Gastrocnemius medialis (tissue), 4 donors: ENCODE measurements at regions of chr11 and their contacts with region 1.

Region 1: GRCh38 chr11:10455637-10456487 is 798 bp downstream of the AMPD3 start:
- DNase-seq: peak; percentile 57
- ATAC-seq: peak; percentile 9 to 27
- H3K4me3 ChIP-seq: peak overlapping the region; percentile 76 to 84 (median 78)
- H3K27ac ChIP-seq: peak overlapping the region; percentile 94 to 100 (median 98)
- H3K4me1 ChIP-seq: peaks cover 51 to 56% of the 10 kb centered on the region in 2 donors
- H3K27me3 ChIP-seq: no peaks in the 10 kb centered on the region
- CTCF ChIP-seq: no peak
- POLR2A ChIP-seq: peak; percentile 84 to 87

Region 2: GRCh38 chr11:10139656-10140055 is 316.2 kb before region 1 on chr11:
- in situ Hi-C with region 1: no loop called
- intact Hi-C with region 1: no loop called
- DNase-seq: no peak
- ATAC-seq: no peak
- H3K4me3 ChIP-seq: no peak overlapping the region
- H3K27ac ChIP-seq: no peak overlapping the region
- H3K4me1 ChIP-seq: peaks cover 0 to 7% of the 10 kb centered on the region in 2 donors
- H3K27me3 ChIP-seq: no peaks in the 10 kb centered on the region
- CTCF ChIP-seq: no peak
- POLR2A ChIP-seq: no peak

Region 3: DNA sequence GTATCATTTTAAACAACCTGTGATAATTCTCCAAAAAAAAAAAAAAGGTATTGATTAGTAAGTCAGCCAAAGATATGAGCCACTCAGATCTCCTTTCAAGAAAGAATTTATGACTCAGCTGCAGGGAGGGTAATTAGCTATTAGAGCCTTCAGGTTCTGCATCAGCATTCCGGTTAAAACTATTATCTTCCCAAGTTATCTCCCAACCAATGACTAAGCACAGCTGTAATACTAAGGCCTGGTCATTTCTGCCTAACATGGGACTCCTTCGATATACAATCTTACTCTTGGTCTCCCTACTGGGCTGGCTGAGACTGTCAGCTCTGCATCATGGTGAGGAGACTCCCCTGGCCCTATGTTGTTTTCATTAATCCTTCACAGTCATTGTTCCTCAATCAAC is 222.3 kb before region 1 on chr11:
- in situ Hi-C with region 1: no loop called
- intact Hi-C with region 1: no loop called
- DNase-seq: no peak
- ATAC-seq: no peak
- H3K4me3 ChIP-seq: no peak overlapping the region
- H3K27ac ChIP-seq: no peak overlapping the region
- H3K4me1 ChIP-seq: peaks cover 3 to 5% of the 10 kb centered on the region in 2 donors
- H3K27me3 ChIP-seq: no peaks in the 10 kb centered on the region
- CTCF ChIP-seq: no peak
- POLR2A ChIP-seq: no peak

Region 4: GRCh38 chr11:10405855-10406592 is 49.8 kb before region 1 on chr11:
- in situ Hi-C with region 1: no loop called
- intact Hi-C with region 1: loop called (anchors 1 kb)
- DNase-seq: peak; percentile 80 to 82
- ATAC-seq: peak; percentile 33 to 62
- H3K4me3 ChIP-seq: no peak overlapping the region
- H3K27ac ChIP-seq: peak overlapping the region; percentile 77 to 95 (median 89)
- H3K4me1 ChIP-seq: peaks cover 55 to 56% of the 10 kb centered on the region in 2 donors
- H3K27me3 ChIP-seq: no peaks in the 10 kb centered on the region
- CTCF ChIP-seq: peak; percentile 56 to 81 (median 71)
- POLR2A ChIP-seq: no peak

Region 5: DNA sequence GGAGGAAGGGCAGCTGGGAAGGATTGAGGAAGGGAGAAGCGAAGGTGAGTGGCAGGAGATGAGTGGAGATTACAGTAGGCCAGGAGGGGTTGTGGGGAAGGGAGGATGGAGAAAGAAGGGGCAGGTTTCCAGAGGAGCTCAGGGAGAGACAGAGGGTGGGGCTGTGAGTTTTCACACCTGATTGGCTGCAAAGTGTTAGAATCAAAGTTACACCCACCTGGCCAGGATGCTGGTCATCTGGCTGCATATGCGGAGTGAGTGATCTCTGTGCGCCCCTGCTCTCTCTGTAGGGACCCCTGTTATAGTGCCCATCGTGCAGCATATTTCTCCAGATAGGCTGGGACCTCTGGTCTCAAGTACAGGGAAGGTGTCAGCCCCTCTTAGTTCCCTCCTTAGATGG is 17.5 kb after region 1 on chr11:
- in situ Hi-C with region 1: no loop called
- intact Hi-C with region 1: loop called (anchors 2 kb)
- DNase-seq: no peak
- ATAC-seq: no peak
- H3K4me3 ChIP-seq: no peak overlapping the region
- H3K27ac ChIP-seq: peak overlapping the region in 3 of 4 donors; percentile 34 to 73 (median 68)
- H3K4me1 ChIP-seq: peaks cover 8 to 42% of the 10 kb centered on the region in 2 donors
- H3K27me3 ChIP-seq: no peaks in the 10 kb centered on the region
- CTCF ChIP-seq: no peak
- POLR2A ChIP-seq: no peak

Region 6: GRCh38 chr11:10484461-10485180 is 28.8 kb after region 1 on chr11:
- in situ Hi-C with region 1: no loop called
- intact Hi-C with region 1: no loop called
- DNase-seq: no peak
- ATAC-seq: no peak
- H3K4me3 ChIP-seq: no peak overlapping the region
- H3K27ac ChIP-seq: no peak overlapping the region
- H3K4me1 ChIP-seq: peaks cover 8 to 19% of the 10 kb centered on the region in 2 donors
- H3K27me3 ChIP-seq: no peaks in the 10 kb centered on the region
- CTCF ChIP-seq: no peak
- POLR2A ChIP-seq: no peak

Region 7: DNA sequence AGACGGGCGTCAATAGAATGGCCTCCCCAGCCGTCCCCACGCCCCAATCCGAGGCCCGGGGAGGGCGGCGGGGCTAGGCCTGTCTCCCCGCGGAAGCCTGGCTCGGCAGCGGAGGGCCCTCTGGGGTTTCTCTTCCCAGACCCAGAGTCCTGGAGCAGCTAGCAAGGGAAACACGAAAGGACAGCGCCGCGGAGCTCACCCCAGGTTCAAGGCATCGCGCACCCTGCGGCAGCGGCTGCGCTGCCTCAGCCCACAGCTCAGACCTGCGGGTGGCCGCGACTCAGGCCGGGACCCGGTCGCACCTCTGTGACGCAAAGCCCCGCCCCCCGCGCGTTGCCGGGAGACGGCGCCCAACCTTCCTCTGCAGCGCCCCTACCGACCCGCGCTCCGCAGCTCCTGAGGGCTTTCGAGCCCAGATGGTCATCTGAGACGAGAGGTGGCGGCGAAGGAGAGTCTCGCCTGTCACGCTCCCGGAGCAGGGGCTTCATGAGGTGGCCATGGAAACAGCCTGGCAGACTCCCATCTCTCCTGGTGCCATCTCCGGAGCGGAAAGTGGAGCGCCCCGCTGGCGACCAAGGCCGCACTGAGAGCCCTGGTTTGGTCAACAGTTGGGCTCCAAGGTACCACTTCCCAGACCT is 85.2 kb after region 1 on chr11 and contains the start of gene RNF141:
- in situ Hi-C with region 1: no loop called
- intact Hi-C with region 1: loop called (anchors 2 kb)
- DNase-seq: peak; percentile 91 to 93
- ATAC-seq: peak; percentile 90 to 93
- H3K4me3 ChIP-seq: peak within 1 kb of the TSS; percentile 89 to 93 (median 92)
- H3K27ac ChIP-seq: peak within 1 kb of the TSS; percentile 91 to 97 (median 94)
- H3K4me1 ChIP-seq: peaks cover 8 to 13% of the 10 kb centered on the region in 2 donors
- H3K27me3 ChIP-seq: no peaks in the 10 kb centered on the region
- CTCF ChIP-seq: peak; percentile 82 to 88 (median 83)
- POLR2A ChIP-seq: peak; percentile 80 to 93
- total RNA-seq, gene RNF141: 16.8 to 38.2 (median 19.0) TPM